ENCODE measurements at regions of chr13 and their contacts with region 1.

Region 1: DNA sequence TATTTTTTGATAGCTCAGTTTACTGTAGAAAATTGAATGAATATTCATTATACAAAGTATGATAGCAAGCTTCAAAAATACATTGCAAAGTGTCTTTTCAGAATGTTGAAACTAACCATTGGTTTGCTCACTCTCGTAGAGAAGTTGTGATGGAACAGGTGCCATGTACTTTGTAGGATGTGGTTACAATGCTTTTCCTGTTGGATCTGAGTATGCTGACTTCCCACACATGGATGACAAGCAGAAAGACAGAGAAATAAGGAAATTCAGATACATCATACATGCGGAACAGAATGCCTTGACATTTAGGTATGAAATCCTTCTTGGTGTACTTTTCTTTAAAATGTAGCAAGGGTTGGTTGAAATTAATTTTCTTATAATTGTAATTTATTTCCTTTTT is 30.5 kb downstream of the CDADC1 start:
- DNase-seq: no peak
- ATAC-seq: no peak
- H3K4me3 Mint-ChIP-seq: no peak overlapping the region
- H3K27ac Mint-ChIP-seq: no peak overlapping the region
- H3K4me1 Mint-ChIP-seq: peaks cover 15% of the 10 kb centered on the region
- H3K27me3 Mint-ChIP-seq: no peaks in the 10 kb centered on the region
- CTCF ChIP-seq: no peak

Region 2: GRCh38 chr13:48477191-48477855 is 800.9 kb before region 1 on chr13:
- CTCF ChIA-PET with region 1: no interaction called
- POLR2A ChIA-PET with region 1: no interaction called
- DNase-seq: no peak
- ATAC-seq: no peak
- H3K4me3 Mint-ChIP-seq: no peak overlapping the region
- H3K27ac Mint-ChIP-seq: no peak overlapping the region
- H3K4me1 Mint-ChIP-seq: no peaks in the 10 kb centered on the region
- H3K27me3 Mint-ChIP-seq: no peaks in the 10 kb centered on the region
- CTCF ChIP-seq: no peak

Region 3: GRCh38 chr13:49098771-49099512 is 179.3 kb before region 1 on chr13:
- CTCF ChIA-PET with region 1: interaction called, 13 read pairs
- POLR2A ChIA-PET with region 1: no interaction called
- DNase-seq: no peak
- ATAC-seq: peak; percentile 48
- H3K4me3 Mint-ChIP-seq: no peak overlapping the region
- H3K27ac Mint-ChIP-seq: no peak overlapping the region
- H3K4me1 Mint-ChIP-seq: no peaks in the 10 kb centered on the region
- H3K27me3 Mint-ChIP-seq: no peaks in the 10 kb centered on the region
- CTCF ChIP-seq: no peak

Region 4: DNA sequence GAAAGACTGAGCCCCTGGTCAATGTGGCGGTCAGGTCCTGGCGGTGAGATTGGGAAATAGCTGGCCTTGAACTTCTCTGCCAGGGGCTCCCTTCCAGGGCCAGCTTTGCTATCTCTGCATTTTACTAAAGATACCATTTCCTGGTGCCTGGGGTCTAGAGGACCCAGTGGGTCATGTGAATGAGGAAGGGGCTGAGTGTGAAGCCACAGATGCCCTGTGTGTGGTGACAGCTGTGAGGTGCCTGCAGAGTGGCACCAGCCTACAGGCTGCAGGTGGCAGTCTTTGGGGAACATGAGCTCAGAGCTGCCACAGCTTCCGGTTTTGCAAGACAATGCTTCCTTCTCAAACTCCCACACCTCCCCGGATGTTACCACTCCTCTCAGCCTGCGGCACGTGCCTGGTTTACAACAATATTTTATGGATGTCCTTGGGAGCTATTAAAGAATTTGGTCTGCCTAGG is 63.3 kb before region 1 on chr13:
- CTCF ChIA-PET with region 1: interaction called, 22 read pairs
- POLR2A ChIA-PET with region 1: no interaction called
- DNase-seq: peak; percentile 43
- ATAC-seq: peak; percentile 60
- H3K4me3 Mint-ChIP-seq: no peak overlapping the region
- H3K27ac Mint-ChIP-seq: no peak overlapping the region
- H3K4me1 Mint-ChIP-seq: peaks cover 40% of the 10 kb centered on the region
- H3K27me3 Mint-ChIP-seq: peaks cover 47% of the 10 kb centered on the region
- CTCF ChIP-seq: no peak

Region 5: DNA sequence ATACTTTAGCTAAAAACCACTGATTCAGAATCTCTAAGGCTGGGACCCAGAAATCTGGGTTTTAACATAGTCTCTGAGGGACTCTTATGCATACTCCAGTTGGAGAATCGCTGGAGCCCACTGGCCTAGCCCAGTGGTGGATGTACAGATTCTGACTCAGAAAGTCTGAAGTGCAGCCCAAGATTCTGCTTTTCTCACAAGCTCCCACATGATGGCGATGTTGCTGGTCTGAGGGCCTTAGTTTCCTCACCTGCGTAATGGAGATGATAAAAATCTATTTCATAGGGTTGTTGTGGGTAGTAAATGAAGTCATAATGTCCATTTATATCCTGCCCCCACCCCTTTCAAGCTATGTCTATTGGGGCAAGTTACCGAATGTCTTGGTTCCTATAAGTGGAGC is 38.2 kb before region 1 on chr13:
- CTCF ChIA-PET with region 1: interaction called, 18 read pairs
- POLR2A ChIA-PET with region 1: no interaction called
- DNase-seq: peak; percentile 18
- ATAC-seq: peak; percentile 82
- H3K4me3 Mint-ChIP-seq: no peak overlapping the region
- H3K27ac Mint-ChIP-seq: no peak overlapping the region
- H3K4me1 Mint-ChIP-seq: no peaks in the 10 kb centered on the region
- H3K27me3 Mint-ChIP-seq: peaks cover 12% of the 10 kb centered on the region; the same call in 1 of the 2 replicates
- CTCF ChIP-seq: no peak

Region 6: GRCh38 chr13:49247643-49248621 is 30.3 kb before region 1 on chr13 and contains the start of gene CDADC1:
- CTCF ChIA-PET with region 1: interaction called, 41 read pairs
- POLR2A ChIA-PET with region 1: interaction called, 4 read pairs
- DNase-seq: peak; percentile 99
- ATAC-seq: peak; percentile 95
- H3K4me3 Mint-ChIP-seq: peak within 1 kb of the TSS; percentile 95
- H3K27ac Mint-ChIP-seq: peak within 1 kb of the TSS; percentile 97
- H3K4me1 Mint-ChIP-seq: peaks cover 12% of the 10 kb centered on the region
- H3K27me3 Mint-ChIP-seq: peaks cover 18% of the 10 kb centered on the region; the same call in 1 of the 2 replicates
- CTCF ChIP-seq: no peak
- total RNA-seq, gene CDADC1: 2.9 to 4.9 TPM (median 4.0 TPM) in 3 replicates

Region 7: DNA sequence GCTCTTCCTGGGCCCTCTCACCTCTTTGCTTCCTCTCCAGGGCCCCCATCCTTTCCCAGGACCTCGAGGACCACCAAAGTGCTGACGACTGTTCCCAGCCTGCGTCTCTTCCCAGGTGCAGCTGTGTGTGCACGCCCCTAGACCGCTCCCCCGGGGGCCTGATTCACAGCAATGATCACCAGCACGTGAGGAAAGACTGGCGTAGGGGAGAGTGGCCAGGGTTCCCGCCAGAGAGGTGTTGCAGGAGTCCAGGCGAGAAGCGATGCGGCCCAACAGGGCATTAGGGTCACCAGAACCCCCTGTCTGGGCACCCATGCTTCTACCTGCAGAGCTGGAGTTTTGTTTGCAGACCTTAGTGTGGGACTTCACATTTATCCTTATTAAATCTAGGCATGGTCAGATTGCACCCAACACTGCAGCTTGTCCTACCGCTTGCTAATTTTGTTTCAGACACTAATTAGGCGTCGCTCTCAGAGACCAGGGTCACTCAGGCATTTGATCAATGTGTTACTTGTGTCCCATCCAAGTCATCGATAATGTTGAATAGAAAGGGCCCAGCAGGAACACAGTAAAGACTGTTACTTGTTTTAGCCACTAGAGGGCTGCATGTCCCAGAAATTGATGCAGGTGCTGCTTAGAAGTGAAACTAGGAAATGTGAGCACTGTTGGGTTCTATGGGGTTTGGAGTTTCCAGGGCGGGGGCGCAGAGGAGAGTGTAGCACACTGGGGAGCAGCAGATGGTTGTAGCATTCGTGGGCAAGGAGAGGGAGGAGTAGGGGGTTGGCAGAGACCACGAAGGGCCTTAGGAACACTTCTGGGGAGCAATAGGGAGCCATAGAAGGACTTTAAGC is 22.8 kb after region 1 on chr13:
- CTCF ChIA-PET with region 1: interaction called, 10 read pairs
- POLR2A ChIA-PET with region 1: no interaction called
- DNase-seq: peak; percentile 35
- ATAC-seq: peak; percentile 79
- H3K4me3 Mint-ChIP-seq: no peak overlapping the region
- H3K27ac Mint-ChIP-seq: no peak overlapping the region
- H3K4me1 Mint-ChIP-seq: peaks cover 35% of the 10 kb centered on the region
- H3K27me3 Mint-ChIP-seq: no peaks in the 10 kb centered on the region; the same call in 1 of the 2 replicates
- CTCF ChIP-seq: peak; percentile 84